ENCODE measurements at regions of chr1 and their contacts with region 1.

Region 1: DNA sequence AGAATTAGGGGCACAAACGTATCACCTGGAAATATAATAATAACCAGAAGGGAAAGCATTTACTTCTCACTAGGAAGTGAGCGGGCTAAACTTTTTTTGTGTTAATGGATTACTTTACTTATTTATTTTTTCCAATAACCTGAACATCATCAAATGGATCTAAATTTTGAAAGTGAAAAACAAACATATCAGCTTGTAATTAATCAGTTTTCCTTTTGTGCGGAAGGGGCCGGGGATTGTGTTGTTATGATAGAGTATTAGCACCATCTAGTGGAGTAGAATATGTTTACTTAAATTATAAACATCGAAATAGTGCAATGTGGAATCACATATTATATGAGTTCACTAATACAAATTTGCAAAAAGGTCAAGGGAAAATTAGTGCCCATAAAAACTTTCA is 9.0 kb downstream of the CFH start:
- DNase-seq: no peak
- ATAC-seq: peak in 2 of 4 donors; percentile 57 to 62
- H3K4me3 ChIP-seq: peak overlapping the region in 8 of 12 donors; percentile 22 to 44 (median 30)
- H3K27ac ChIP-seq: peak overlapping the region in 1 of 12 donors; percentile 21
- H3K4me1 ChIP-seq: peaks cover 0 to 20% (median 0%) of the 10 kb centered on the region in 12 donors
- H3K27me3 ChIP-seq: no peaks in the 10 kb centered on the region
- CTCF ChIP-seq: peak; percentile 39 to 71 (median 54)
- POLR2A ChIP-seq: no peak

Region 2: DNA sequence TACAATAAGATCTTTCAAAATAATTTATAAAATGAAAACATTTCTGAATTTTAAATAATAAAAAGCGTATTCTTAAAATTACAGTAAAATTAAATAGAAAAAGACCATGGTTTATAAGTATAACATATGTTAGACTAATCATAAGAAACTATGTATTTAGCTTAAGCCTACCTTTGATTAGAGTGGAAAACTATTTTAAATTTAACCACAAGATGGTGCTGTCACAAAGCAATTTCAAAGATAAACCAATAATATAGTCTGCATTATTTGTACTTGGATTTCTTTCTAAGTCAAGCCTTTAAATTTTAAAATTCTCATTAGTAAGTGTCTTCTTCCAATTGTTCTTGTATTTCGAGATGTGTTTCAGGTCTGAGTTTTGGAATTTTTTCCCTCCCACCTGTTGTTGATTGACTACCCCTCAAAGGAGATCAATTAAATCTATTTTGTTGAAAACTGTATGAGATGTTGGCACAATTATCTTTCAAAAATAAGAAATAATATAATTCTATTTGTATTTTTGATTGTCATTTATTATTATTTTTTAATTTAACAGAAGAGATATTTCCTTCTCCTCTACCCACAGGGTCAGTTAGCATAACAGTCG is 512.4 kb before region 1 on chr1:
- intact Hi-C with region 1: loop called in 9 of 10 experiments (anchors 2 to 10 kb)
- DNase-seq: no peak
- ATAC-seq: no peak
- H3K4me3 ChIP-seq: no peak overlapping the region
- H3K27ac ChIP-seq: no peak overlapping the region
- H3K4me1 ChIP-seq: peaks cover 0 to 5% (median 0%) of the 10 kb centered on the region in 12 donors
- H3K27me3 ChIP-seq: no peaks in the 10 kb centered on the region
- CTCF ChIP-seq: peak; percentile 35 to 77 (median 58)
- POLR2A ChIP-seq: no peak

Region 3: DNA sequence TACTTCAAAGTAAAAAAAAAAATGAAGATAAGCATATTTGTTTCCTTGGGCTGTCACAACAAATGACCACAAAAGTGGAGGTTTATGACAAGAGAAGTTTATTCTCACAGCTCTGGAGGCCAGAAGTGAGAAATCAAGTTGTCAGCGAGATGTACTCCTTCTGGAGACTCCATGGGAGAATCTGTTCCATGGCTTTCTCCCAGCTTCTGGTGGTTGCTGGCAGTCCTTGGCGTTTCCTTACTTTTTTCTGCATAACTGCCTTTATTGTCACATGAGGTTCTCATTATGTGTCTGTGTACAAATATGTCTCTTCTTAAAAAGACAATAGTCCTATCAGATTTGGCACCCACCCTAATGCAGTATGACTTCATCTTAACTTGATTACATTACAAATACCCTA is 450.9 kb before region 1 on chr1:
- intact Hi-C with region 1: no loop called
- DNase-seq: peak in 3 of 5 donors; percentile 20 to 24 (median 23)
- ATAC-seq: peak in 3 of 4 donors; percentile 42 to 62 (median 50)
- H3K4me3 ChIP-seq: no peak overlapping the region
- H3K27ac ChIP-seq: peak overlapping the region in 2 of 12 donors; percentile 60 to 61
- H3K4me1 ChIP-seq: no peaks in the 10 kb centered on the region
- H3K27me3 ChIP-seq: no peaks in the 10 kb centered on the region
- CTCF ChIP-seq: no peak
- POLR2A ChIP-seq: no peak

Region 4: GRCh38 chr1:196317535-196318522 is 343.0 kb before region 1 on chr1:
- intact Hi-C with region 1: loop called in 5 of 10 experiments (anchors 2 to 5 kb)
- DNase-seq: no peak
- ATAC-seq: no peak
- H3K4me3 ChIP-seq: no peak overlapping the region
- H3K27ac ChIP-seq: no peak overlapping the region
- H3K4me1 ChIP-seq: no peaks in the 10 kb centered on the region
- H3K27me3 ChIP-seq: no peaks in the 10 kb centered on the region
- CTCF ChIP-seq: peak in 9 of 12 donors; percentile 15 to 62 (median 41)
- POLR2A ChIP-seq: no peak

Region 5: GRCh38 chr1:196324345-196324744 is 336.5 kb before region 1 on chr1:
- intact Hi-C with region 1: loop called in 5 of 10 experiments (anchors 2 to 5 kb)
- DNase-seq: no peak
- ATAC-seq: no peak
- H3K4me3 ChIP-seq: no peak overlapping the region
- H3K27ac ChIP-seq: no peak overlapping the region
- H3K4me1 ChIP-seq: no peaks in the 10 kb centered on the region
- H3K27me3 ChIP-seq: no peaks in the 10 kb centered on the region
- CTCF ChIP-seq: no peak
- POLR2A ChIP-seq: no peak

Region 6: DNA sequence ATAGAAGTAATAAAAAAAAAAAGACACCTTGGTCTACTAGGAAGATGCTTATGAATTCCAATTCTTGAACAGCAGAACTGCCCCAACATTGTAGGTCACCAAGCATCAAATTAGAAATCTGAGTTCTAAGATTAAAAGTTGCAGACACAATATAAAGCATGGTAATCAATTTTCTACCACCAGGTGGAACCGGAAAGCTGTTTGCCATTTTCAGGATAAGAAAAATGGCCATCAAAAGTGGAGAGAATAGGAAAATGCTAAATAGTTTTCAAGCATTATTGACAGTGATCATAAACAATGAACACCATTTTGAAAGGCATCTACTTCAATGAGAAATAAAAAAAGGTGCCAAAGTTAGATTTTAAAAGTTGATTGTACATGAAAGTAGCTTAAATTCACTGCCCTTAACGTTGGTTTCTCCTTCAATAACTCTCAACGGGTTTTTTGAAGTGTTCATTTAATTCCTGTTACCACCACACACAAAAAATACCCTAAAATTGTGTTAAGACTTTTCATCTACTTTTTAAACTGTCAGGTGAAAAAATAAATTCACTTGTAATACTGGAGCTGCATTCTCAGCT is 305.6 kb before region 1 on chr1:
- intact Hi-C with region 1: loop called in 8 of 10 experiments (anchors 5 to 10 kb)
- DNase-seq: no peak
- ATAC-seq: no peak
- H3K4me3 ChIP-seq: no peak overlapping the region
- H3K27ac ChIP-seq: no peak overlapping the region
- H3K4me1 ChIP-seq: no peaks in the 10 kb centered on the region
- H3K27me3 ChIP-seq: no peaks in the 10 kb centered on the region
- CTCF ChIP-seq: peak in 10 of 12 donors; percentile 25 to 59 (median 44)
- POLR2A ChIP-seq: no peak

Region 7: DNA sequence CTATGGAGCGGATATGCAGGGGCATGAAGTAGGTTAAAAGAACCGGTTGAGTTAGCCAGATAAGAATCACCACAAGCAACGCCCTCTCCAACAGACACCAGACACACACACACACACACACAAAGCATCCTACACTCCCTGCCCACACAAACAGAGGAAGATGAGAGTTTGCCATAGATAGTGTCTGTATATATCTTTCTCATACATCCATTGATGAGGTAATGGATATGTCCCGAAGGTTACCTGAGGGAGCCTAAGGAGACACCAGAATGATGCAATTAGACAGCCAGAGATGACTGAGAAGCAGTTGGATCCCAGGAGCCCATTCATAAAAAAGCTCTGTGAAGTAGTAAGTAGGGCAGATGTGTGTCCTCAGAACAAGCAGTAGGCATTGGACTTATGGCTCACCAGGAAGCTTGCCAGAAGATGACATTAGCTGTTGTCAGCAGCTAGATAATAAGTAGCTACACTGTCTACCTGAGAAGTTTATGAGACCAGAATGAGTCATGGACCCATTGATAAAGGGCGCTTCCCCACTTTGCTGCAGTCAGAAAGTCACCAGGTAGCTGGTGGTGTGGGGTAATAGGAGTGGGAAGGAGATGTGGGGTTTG is 299.6 kb before region 1 on chr1:
- intact Hi-C with region 1: loop called in 8 of 10 experiments (anchors 5 to 10 kb)
- DNase-seq: no peak
- ATAC-seq: no peak
- H3K4me3 ChIP-seq: no peak overlapping the region
- H3K27ac ChIP-seq: no peak overlapping the region
- H3K4me1 ChIP-seq: no peaks in the 10 kb centered on the region
- H3K27me3 ChIP-seq: no peaks in the 10 kb centered on the region
- CTCF ChIP-seq: no peak
- POLR2A ChIP-seq: no peak

Region 8: GRCh38 chr1:196902344-196902743 is 241.5 kb after region 1 on chr1:
- intact Hi-C with region 1: no loop called
- DNase-seq: no peak
- ATAC-seq: no peak
- H3K4me3 ChIP-seq: no peak overlapping the region
- H3K27ac ChIP-seq: no peak overlapping the region
- H3K4me1 ChIP-seq: no peaks in the 10 kb centered on the region
- H3K27me3 ChIP-seq: peaks cover 0 to 19% (median 0%) of the 10 kb centered on the region in 9 donors
- CTCF ChIP-seq: no peak
- POLR2A ChIP-seq: no peak

Measured in heart left ventricle (tissue), 16 donors.